Dorsolateral prefrontal cortex (tissue), 120 donors: ENCODE measurements at regions of chr9 and their contacts with region 1.

Region 1: DNA sequence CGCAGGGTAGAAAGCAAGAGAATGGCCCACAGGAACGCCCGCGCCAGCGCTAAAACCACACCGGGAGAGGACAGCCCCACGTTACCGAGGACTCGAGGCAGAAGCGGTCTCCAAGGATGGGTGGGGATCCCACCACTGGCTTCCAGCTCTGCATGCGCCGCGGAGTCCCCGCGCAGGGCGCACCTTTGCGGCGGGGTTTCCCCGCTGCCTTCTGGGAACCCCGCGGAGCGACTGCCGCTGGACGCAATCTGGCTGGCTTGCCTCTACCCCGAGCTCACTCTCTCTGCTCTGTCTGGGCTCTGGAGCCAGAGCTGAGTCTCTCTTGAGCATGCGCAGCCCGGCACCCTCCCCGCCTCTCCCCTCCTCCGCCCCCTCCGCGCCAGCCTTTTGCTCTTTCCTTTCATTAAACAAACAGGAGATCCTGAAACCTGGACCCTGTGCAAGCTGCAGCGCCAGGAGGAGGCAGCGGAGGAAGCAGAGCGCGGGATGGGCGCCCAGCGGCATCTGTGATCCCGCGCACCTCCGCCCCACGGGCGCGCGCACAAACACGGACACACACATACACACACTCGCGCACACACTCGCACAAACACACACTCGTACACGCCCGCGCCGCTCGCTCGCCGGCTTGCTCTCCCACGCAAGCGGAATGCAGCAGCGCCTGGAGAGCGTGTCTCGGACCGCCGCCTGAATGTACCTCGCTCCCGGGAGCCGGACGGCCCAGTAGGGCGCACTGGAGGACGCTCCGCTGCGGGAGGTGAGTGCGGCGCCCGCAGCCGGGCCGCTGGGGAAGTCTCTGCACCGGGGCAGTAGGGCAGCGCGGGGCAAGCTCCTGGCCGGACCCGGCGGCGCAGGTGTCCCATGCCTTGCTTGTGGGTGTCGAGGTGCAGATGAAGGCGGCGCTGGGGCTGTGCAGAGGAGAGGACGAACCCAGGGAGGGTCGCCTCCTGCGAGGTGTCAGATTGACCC is at the start of gene PLPPR1:
- DNase-seq: peak; percentile 72 to 89 (median 84)
- H3K4me3 ChIP-seq: peak within 1 kb of the TSS; percentile 54 to 91 (median 77)
- H3K27ac ChIP-seq: peak within 1 kb of the TSS in 58 of 59 donors; percentile 48 to 94 (median 85)
- H3K27me3 ChIP-seq: peaks cover 0 to 19% (median 0%) of the 10 kb centered on the region in 45 donors
- CTCF ChIP-seq: peak in 13 of 56 donors; percentile 4 to 24 (median 17)
- total RNA-seq, gene PLPPR1: 3.8 to 68.1 (median 17.9) TPM

Region 2: DNA sequence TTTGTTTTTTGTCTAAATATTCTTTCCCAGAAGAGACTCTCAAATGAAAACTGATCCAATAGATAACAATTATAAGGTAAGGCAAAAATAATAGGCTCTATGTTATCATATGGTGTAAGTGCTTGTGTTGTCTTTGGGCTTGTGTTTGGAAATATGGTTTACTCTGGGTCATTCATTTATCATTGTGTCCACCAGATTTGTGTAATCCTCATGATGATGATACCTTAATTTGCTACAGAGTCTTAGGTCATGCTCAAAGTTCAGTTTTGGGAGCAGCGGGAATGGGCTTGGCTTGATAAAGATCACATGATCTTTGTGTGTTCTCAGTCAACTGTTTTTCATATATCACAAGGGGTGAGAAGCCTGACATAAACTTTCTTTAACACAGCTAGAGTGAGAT is 34.1 kb after region 1 on chr9:
- intact Hi-C with region 1: no loop called
- DNase-seq: no peak
- H3K4me3 ChIP-seq: no peak overlapping the region
- H3K27ac ChIP-seq: no peak overlapping the region
- H3K27me3 ChIP-seq: no peaks in the 10 kb centered on the region
- CTCF ChIP-seq: no peak

Region 3: GRCh38 chr9:101073122-101073521 is 44.5 kb after region 1 on chr9:
- intact Hi-C with region 1: no loop called
- DNase-seq: no peak
- H3K4me3 ChIP-seq: no peak overlapping the region
- H3K27ac ChIP-seq: no peak overlapping the region
- H3K27me3 ChIP-seq: peaks cover 0 to 5% (median 0%) of the 10 kb centered on the region in 45 donors
- CTCF ChIP-seq: no peak

Region 4: GRCh38 chr9:101093620-101094019 is 65.0 kb after region 1 on chr9:
- intact Hi-C with region 1: loop called in 1 of 2 experiments (anchors 5 kb)
- DNase-seq: no peak
- H3K4me3 ChIP-seq: no peak overlapping the region
- H3K27ac ChIP-seq: no peak overlapping the region
- H3K27me3 ChIP-seq: no peaks in the 10 kb centered on the region
- CTCF ChIP-seq: no peak

Region 5: DNA sequence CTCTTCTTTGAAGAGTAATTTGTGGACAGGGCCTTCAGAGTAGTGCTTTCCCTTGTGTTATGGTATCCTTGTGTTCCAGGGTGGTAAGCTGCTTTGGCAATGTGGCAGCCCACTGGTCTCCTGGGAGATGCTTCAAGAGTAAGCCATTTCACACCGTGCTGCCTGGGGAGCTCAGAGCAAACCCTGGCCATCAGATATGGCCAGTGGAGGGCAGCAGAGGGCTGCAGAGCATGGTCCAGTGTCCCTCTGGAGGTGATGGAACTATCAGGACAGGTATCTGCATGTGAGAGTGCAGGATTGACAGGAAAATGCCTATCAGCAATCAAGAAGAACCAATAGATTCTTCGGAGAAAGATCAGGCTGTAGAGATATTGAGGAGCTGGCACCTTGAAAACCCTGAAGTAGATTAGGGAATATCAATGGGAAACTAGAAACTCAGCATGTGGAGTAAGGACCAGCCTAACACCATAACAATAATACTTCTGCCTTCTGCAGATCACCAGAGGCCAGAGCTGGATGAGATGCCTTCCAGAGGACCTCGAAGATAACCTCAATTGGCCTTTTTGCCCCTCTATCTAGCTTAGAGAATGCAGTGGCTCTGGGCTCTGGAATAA is 90.7 kb after region 1 on chr9:
- intact Hi-C with region 1: loop called (anchors 5 kb)
- DNase-seq: peak; percentile 43 to 83 (median 70)
- H3K4me3 ChIP-seq: no peak overlapping the region
- H3K27ac ChIP-seq: peak overlapping the region in 35 of 59 donors; percentile 6 to 77 (median 33)
- H3K27me3 ChIP-seq: no peaks in the 10 kb centered on the region
- CTCF ChIP-seq: peak; percentile 59 to 96 (median 86)

Region 6: DNA sequence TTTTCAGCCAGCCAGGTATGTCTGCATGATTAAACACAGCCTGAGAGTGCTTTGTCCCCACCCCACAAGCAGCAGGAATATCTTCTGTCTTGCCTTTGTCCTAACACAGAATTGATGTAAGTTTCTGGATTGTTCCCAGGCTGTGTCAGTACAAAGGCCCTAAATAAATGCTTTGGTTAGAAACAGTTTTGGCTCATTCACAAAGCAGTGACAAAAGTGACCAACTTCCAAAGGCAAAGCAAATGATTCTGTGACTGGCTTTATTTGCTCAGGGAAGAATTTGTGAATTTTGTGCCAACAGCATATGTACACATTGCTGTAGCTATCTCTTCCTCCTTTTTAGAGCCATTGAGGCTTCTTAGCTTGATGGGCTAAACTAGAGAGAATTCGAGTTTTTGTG is 133.6 kb after region 1 on chr9:
- intact Hi-C with region 1: loop called in 1 of 2 experiments (anchors 5 kb)
- DNase-seq: no peak
- H3K4me3 ChIP-seq: peak overlapping the region in 1 of 59 donors; percentile 15
- H3K27ac ChIP-seq: peak overlapping the region; percentile 31 to 97 (median 90)
- H3K27me3 ChIP-seq: no peaks in the 10 kb centered on the region
- CTCF ChIP-seq: peak in 1 of 56 donors; percentile 19

Region 7: DNA sequence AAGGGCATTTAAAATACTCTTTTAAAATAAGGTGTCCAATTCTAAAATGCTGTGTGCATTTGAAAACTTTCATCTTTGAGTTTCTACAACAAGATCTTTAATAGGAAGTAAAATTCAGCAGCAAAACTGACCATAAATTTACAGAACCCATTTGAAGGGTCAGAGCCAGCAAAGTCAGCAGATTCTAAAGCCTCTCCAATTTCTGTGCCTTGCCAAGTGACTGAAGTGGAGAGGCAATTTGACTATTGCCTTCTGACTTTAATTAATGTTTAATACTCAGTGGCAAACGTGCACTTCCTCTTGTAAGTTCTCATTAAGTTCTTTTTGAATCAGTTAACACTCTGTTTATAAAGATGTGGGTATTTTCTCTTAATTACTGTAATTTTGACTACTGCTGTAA is 201.0 kb after region 1 on chr9:
- intact Hi-C with region 1: loop called in 1 of 2 experiments (anchors 5 kb)
- DNase-seq: no peak
- H3K4me3 ChIP-seq: no peak overlapping the region
- H3K27ac ChIP-seq: peak overlapping the region in 53 of 59 donors; percentile 5 to 98 (median 82)
- H3K27me3 ChIP-seq: no peaks in the 10 kb centered on the region
- CTCF ChIP-seq: no peak